Dorsolateral prefrontal cortex (tissue), 120 donors: ENCODE measurements at regions of chrX and their contacts with region 1.

Region 1: DNA sequence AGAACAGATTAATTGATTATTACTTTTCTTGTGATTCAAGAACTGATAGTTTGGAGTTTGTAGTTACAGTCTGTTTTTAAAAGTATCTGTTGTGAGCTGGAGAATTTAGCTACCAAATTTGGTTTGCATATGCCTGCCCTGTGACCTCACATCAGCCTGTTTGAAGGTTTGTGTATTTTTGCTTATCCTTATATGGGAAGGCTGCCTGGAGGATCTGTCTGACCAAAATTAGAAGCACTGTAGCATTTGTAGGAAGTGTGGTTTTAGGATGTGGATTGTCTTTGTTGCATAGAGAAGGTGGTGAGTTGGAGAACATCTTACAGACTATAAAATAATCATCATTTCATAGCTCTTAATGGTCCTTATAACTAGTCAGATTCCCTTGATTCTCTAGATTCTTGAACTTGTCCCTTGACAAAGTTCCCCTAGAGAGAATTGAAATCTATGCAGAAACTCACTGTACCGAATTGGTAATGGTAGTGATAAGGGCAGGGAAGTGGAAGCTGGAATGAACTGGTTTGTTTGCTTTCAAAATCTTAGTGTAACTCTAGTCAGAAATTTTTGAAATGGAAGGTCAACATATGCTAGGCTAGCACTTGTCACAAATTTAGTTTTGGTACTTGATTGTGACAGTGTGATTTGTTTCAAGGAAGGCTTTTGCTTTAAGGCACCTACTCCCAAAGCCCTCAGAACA is 57.3 kb downstream of the SH3BGRL start:
- DNase-seq: no peak
- H3K4me3 ChIP-seq: no peak overlapping the region
- H3K27ac ChIP-seq: peak overlapping the region in 1 of 59 donors; percentile 6
- H3K27me3 ChIP-seq: peaks cover 0 to 53% (median 9%) of the 10 kb centered on the region in 45 donors
- CTCF ChIP-seq: no peak

Region 2: DNA sequence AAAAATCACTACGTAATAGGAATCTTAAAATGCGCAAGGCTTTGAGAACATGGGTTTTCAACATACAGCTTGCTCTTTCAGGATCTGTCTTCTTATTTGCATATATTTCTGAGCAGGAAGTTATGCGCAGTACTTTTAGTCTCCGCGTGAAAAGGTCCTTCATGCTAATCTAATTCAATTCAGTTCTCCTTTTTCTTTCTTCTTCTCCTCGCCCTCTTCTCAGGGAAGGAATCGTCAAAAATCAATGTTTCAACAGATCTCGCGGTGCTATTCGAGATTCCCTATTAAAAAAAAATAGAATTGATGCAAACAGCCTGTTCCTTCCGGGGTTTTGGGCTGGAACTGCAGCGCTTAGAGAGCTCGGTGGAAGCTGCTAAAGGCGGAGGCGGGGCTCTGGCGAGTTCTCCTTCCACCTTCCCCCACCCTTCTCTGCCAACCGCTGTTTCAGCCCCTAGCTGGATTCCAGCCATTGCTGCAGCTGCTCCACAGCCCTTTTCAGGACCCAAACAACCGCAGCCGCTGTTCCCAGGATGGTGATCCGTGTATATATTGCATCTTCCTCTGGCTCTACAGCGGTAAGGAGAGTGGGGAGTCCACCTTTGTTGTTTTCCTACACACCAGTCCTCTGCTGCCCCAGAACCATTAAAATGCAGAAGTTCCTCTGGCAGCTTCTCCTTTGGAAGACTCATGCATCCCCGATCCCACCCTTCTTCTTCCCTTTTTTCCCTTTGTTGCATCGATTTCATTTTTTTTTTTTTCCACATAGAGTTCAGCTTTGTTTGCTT is 57.3 kb before region 1 on chrX and contains the starts of genes HMGN5 and SH3BGRL:
- intact Hi-C with region 1: loop called in 1 of 2 experiments (anchors 10 kb)
- DNase-seq: peak; percentile 19 to 79 (median 68)
- H3K4me3 ChIP-seq: peak within 1 kb of the TSS; percentile 34 to 82 (median 63)
- H3K27ac ChIP-seq: peak within 1 kb of the TSS in 56 of 59 donors; percentile 20 to 91 (median 76)
- H3K27me3 ChIP-seq: peaks cover 0 to 26% (median 0%) of the 10 kb centered on the region in 45 donors
- CTCF ChIP-seq: peak in 3 of 56 donors; percentile 7 to 23 (median 11)
- total RNA-seq, gene HMGN5: 3.2 to 17.2 (median 9.2) TPM
- total RNA-seq, gene SH3BGRL: 85.2 to 159 (median 117) TPM

Region 3: GRCh38 chrX:81241753-81242152 is 17.4 kb before region 1 on chrX:
- intact Hi-C with region 1: no loop called
- DNase-seq: no peak
- H3K4me3 ChIP-seq: no peak overlapping the region
- H3K27ac ChIP-seq: no peak overlapping the region
- H3K27me3 ChIP-seq: peaks cover 0 to 30% (median 4%) of the 10 kb centered on the region in 45 donors
- CTCF ChIP-seq: no peak